Left lung (tissue), 14 donors: ENCODE measurements at regions of chr6 and their contacts with region 1.

Region 1: DNA sequence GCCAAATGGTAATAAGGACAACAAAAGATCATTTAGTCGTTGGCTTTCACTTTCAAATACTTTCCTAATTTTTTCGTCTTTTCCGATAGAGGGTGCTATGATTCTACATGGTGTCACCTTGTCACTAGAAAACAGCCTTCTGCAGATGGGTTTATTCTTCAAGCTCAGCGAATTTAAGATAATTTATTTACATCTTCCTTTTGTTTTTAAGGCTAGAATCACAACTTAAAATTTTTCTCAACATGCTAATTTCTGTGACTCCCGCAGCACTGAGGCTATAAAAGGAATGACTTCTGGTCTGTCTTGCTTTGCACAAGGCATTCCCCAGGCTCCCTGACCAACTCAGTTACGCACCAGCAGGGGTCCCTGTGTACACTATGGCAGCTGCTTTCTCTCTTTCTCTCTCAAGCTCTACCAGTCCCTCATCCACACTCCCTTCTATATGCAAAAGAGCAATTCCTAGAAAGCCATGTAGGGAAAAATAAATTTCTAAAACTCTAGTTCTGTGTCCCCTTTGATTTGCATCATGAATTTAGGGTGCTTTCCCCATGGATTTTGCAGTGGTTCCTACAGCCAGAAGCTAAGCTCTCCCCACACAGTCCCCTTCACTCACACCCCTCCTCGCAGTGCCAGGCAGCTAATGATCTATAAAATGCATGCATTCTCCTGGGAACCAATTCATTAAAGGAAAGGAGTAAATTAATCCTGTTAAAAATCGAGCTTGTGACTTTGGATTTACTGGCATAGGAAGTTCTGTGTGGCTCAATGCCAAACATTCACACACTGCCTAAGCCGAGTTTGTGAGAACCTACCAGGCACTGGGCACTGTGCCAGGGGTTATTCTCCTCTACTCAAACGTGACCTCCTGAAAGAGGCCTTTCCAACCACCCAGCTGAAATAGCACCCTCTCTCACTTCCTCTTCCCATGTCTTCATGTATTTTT is 74.5 kb downstream of the DCDC2 start:
- DNase-seq: peak; percentile 39 to 76 (median 59)
- ATAC-seq: peak; percentile 99
- H3K4me3 ChIP-seq: no peak overlapping the region
- H3K27ac ChIP-seq: no peak overlapping the region
- H3K4me1 ChIP-seq: peaks cover 0 to 14% of the 10 kb centered on the region in 2 donors
- H3K27me3 ChIP-seq: no peaks in the 10 kb centered on the region
- CTCF ChIP-seq: peak; percentile 49

Region 2: DNA sequence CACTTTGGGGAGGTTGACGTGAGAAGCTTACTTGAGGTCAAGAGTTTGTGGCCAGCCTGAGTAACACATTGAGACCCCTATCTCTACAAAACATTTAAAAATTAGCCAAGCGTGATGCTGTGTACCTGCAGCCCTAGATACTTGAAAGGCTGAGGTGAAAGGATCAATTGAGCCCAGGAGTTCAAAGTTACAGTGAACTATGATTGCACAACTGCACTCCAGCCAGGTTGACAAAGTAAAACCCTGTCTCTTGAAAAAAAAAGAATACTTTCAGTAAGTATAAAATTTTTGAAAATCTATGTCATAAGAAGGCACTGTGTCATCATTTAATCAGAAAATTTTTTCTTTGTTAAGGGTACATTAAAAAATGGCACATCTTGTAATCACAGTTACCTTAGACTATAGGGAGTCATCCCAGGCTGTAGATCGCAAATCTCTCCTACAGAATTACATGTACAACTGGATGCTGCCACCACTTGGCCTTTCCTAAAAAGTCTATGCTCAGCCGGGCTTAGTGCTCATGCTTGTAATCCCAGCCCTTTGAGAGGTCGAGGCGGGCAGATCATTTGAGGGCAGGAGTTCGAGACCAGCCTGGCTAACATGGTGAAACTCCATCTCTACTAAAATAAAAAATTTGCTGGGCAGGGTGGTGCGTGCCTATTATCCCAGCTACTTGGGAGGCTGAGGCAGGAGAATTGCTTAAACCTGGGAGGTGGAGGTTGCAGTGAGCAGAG is 102.4 kb after region 1 on chr6:
- intact Hi-C with region 1: loop called in 1 of 2 experiments (anchors 10 kb)
- DNase-seq: no peak
- ATAC-seq: no peak
- H3K4me3 ChIP-seq: no peak overlapping the region
- H3K27ac ChIP-seq: no peak overlapping the region
- H3K4me1 ChIP-seq: no peaks in the 10 kb centered on the region
- H3K27me3 ChIP-seq: no peaks in the 10 kb centered on the region
- CTCF ChIP-seq: no peak